T-cell (primary cell): ENCODE measurements at regions of chr2 and their contacts with region 1.

Region 1: GRCh38 chr2:200901459-200902072 is 12.4 kb downstream of the NIF3L1 start:
- DNase-seq: peak; percentile 34 to 89 (median 69)
- ATAC-seq: peak; percentile 100
- H3K4me3 ChIP-seq: no peak overlapping the region
- H3K4me3 Mint-ChIP-seq: no peak overlapping the region
- H3K27ac ChIP-seq: peak overlapping the region; percentile 34
- H3K27ac Mint-ChIP-seq: peak overlapping the region; percentile 4 to 43
- H3K4me1 ChIP-seq: peaks cover 0 to 2% of the 10 kb centered on the region in 2 experiments
- H3K4me1 Mint-ChIP-seq: peaks cover 7 to 8% (median 7%) of the 10 kb centered on the region in 3 donors
- H3K27me3 ChIP-seq: no peaks in the 10 kb centered on the region
- H3K27me3 Mint-ChIP-seq: no peaks in the 10 kb centered on the region

Region 2: DNA sequence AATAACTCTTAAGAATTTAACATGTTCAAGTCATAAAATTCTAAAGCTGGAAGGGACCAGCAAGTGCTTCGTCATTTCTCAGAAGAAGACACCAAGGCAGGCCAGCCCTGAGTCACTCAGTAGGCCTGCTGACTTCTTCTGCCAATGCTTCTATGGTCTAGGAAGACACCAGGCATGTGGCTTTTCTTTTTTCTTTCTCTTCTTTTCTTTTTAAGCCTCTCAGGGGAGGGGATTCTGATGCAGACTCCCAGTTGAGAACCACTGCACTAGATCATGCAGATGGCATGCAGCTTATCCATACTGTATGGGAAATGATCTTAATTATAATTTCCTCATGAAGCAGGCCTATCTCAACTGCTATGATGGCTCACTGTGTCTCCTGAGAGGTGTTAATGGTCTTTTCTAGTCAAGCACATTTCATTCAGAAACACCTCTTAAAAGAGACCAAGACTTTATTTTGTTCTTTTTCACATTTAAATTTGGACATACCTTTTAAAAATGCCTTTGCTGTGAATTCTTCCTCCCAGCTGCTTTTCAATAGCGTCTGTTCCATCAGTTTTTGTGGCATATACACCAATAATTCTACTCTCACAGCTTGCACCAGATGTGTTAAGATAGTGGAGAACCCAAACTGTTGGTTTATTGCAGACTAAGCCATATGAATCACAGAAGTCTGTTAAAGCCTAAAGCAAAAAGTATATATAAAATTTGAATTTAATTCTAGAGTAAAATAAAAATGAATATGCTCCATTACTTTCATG is 403.0 kb before region 1 on chr2:
- CTCF ChIA-PET with region 1: no interaction called
- POLR2A ChIA-PET with region 1: no interaction called
- DNase-seq: no peak
- ATAC-seq: no peak
- H3K4me3 ChIP-seq: no peak overlapping the region
- H3K4me3 Mint-ChIP-seq: no peak overlapping the region
- H3K27ac ChIP-seq: no peak overlapping the region
- H3K27ac Mint-ChIP-seq: no peak overlapping the region
- H3K4me1 ChIP-seq: no peaks in the 10 kb centered on the region
- H3K4me1 Mint-ChIP-seq: peaks cover 6 to 12% (median 8%) of the 10 kb centered on the region in 3 donors
- H3K27me3 ChIP-seq: no peaks in the 10 kb centered on the region
- H3K27me3 Mint-ChIP-seq: no peaks in the 10 kb centered on the region

Region 3: DNA sequence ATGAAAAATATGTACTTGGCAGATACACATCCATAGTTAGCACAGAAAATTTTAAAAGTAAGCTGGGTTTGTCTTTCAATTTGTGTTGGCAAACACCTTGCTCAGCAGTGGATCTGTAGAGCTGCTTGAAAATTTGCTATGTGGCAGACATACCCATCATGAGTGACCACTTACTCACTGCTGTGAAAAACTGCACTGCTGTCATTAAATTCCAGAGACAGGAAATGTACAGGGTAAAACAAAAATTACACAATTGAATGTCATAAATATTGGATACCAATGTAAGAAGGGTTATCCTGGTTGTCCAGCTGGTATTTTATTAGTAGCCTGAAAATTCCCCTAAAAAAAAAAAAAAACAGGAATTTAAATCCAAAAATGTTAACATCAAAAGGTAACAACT is 12.1 kb after region 1 on chr2:
- CTCF ChIA-PET with region 1: interaction called in 1 of 2 experiments, 8 read pairs
- POLR2A ChIA-PET with region 1: interaction called in 1 of 2 experiments, 14 read pairs
- DNase-seq: no peak
- ATAC-seq: no peak
- H3K4me3 ChIP-seq: no peak overlapping the region
- H3K4me3 Mint-ChIP-seq: no peak overlapping the region
- H3K27ac ChIP-seq: no peak overlapping the region
- H3K27ac Mint-ChIP-seq: peak overlapping the region in 1 of 2 donors; percentile 29
- H3K4me1 ChIP-seq: no peaks in the 10 kb centered on the region
- H3K4me1 Mint-ChIP-seq: no peaks in the 10 kb centered on the region
- H3K27me3 ChIP-seq: no peaks in the 10 kb centered on the region
- H3K27me3 Mint-ChIP-seq: no peaks in the 10 kb centered on the region

Region 4: GRCh38 chr2:201158111-201158929 is 256.8 kb after region 1 on chr2:
- CTCF ChIA-PET with region 1: interaction called, 6 to 10 read pairs
- POLR2A ChIA-PET with region 1: no interaction called
- DNase-seq: peak in 34 of 35 experiments; percentile 25 to 81 (median 58)
- ATAC-seq: peak; percentile 84 to 95 (median 86)
- H3K4me3 ChIP-seq: no peak overlapping the region
- H3K4me3 Mint-ChIP-seq: no peak overlapping the region
- H3K27ac ChIP-seq: peak overlapping the region; percentile 71
- H3K27ac Mint-ChIP-seq: peak overlapping the region; percentile 85 to 88
- H3K4me1 ChIP-seq: peaks cover 0 to 12% of the 10 kb centered on the region in 2 experiments
- H3K4me1 Mint-ChIP-seq: peaks cover 17 to 30% (median 18%) of the 10 kb centered on the region in 3 donors
- H3K27me3 ChIP-seq: no peaks in the 10 kb centered on the region
- H3K27me3 Mint-ChIP-seq: no peaks in the 10 kb centered on the region

Region 5: GRCh38 chr2:201220102-201220570 is 318.6 kb after region 1 on chr2:
- CTCF ChIA-PET with region 1: interaction called in 1 of 2 experiments, 10 read pairs
- POLR2A ChIA-PET with region 1: no interaction called
- DNase-seq: peak in 6 of 35 experiments; percentile 11 to 27 (median 18)
- ATAC-seq: peak in 3 of 4 experiments; percentile 23 to 45 (median 29)
- H3K4me3 ChIP-seq: no peak overlapping the region
- H3K4me3 Mint-ChIP-seq: peak overlapping the region in 1 of 3 donors; percentile 36
- H3K27ac ChIP-seq: no peak overlapping the region
- H3K27ac Mint-ChIP-seq: peak overlapping the region; percentile 80 to 83
- H3K4me1 ChIP-seq: peaks cover 12 to 19% of the 10 kb centered on the region in 2 experiments
- H3K4me1 Mint-ChIP-seq: peaks cover 43 to 57% (median 53%) of the 10 kb centered on the region in 3 donors
- H3K27me3 ChIP-seq: no peaks in the 10 kb centered on the region
- H3K27me3 Mint-ChIP-seq: no peaks in the 10 kb centered on the region